Esophagus muscularis mucosa (tissue), 4 donors: ENCODE measurements at regions of chr2 and their contacts with region 1.

Region 1: DNA sequence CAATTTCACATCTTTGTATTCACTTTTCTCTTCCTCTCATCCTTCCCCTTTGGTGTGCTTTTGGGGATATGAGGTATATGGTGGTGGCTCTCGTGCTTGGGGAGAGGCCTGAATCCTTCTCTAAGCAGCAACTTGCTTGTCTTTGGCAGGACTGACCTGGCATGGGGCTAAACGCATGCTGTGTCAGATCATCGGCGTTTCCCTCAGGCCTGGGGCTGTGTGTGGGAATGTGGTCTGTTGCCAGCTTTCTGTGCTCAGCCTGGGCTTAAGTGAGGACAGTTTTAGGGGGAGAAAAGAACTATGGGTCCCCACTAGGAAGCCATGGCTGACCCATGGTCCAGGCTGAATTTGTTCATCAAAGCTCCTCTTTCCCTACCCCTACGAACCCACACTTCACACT is 60.7 kb downstream of the TET3 start:
- DNase-seq: no peak
- H3K4me3 ChIP-seq: no peak overlapping the region
- H3K27ac ChIP-seq: no peak overlapping the region
- H3K4me1 ChIP-seq: no peaks in the 10 kb centered on the region
- H3K27me3 ChIP-seq: no peaks in the 10 kb centered on the region
- CTCF ChIP-seq: no peak
- EP300 ChIP-seq: no peak
- POLR2A ChIP-seq: no peak

Region 2: GRCh38 chr2:74080346-74080745 is 34.9 kb after region 1 on chr2:
- intact Hi-C with region 1: loop called (anchors 5 kb)
- DNase-seq: no peak
- H3K4me3 ChIP-seq: peak overlapping the region in 3 of 4 donors; percentile 2 to 26 (median 24)
- H3K27ac ChIP-seq: peak overlapping the region in 3 of 4 donors; percentile 4 to 13 (median 11)
- H3K4me1 ChIP-seq: peaks cover 6 to 26% (median 11%) of the 10 kb centered on the region in 4 donors
- H3K27me3 ChIP-seq: no peaks in the 10 kb centered on the region
- CTCF ChIP-seq: peak; percentile 25 to 47 (median 47)
- EP300 ChIP-seq: no peak
- POLR2A ChIP-seq: no peak

Region 3: GRCh38 chr2:74708883-74709282 is 663.4 kb after region 1 on chr2:
- intact Hi-C with region 1: no loop called
- DNase-seq: peak; percentile 90
- H3K4me3 ChIP-seq: no peak overlapping the region
- H3K27ac ChIP-seq: no peak overlapping the region
- H3K4me1 ChIP-seq: no peaks in the 10 kb centered on the region
- H3K27me3 ChIP-seq: peaks cover 0 to 3% (median 0%) of the 10 kb centered on the region in 4 donors
- CTCF ChIP-seq: no peak
- EP300 ChIP-seq: no peak
- POLR2A ChIP-seq: no peak